ENCODE measurements at regions of chr1 and their contacts with region 1.

Region 1: DNA sequence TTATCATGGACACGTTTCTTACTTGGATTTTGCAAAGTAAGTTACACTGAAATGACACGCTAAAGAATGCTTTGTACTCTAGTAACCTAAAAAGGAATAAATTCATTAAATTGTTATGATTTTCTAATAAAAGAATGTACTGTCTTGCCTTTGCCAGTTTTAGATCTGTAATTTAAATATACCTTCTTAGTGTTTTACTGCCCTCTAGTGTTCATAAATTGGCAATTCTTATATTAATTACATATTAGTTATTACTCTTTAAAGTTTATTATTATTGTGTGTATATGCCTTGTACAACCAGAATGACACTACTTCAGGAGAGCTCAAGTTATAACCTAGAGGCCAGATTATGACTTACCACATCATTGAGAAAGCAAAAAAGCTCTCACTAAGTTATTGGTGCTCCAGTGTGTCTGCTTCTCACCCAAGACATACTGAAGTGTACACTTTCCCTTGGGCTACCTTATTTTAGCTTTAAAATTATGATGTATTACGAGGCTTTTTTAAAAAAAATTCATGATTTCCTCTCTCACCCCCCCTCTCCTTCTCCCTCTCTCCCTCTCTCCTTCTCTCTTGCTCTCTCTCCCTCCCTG is 169.9 kb downstream of the HS2ST1 start:
- DNase-seq: no peak
- H3K4me3 ChIP-seq: no peak overlapping the region
- CTCF ChIP-seq: no peak

Region 2: DNA sequence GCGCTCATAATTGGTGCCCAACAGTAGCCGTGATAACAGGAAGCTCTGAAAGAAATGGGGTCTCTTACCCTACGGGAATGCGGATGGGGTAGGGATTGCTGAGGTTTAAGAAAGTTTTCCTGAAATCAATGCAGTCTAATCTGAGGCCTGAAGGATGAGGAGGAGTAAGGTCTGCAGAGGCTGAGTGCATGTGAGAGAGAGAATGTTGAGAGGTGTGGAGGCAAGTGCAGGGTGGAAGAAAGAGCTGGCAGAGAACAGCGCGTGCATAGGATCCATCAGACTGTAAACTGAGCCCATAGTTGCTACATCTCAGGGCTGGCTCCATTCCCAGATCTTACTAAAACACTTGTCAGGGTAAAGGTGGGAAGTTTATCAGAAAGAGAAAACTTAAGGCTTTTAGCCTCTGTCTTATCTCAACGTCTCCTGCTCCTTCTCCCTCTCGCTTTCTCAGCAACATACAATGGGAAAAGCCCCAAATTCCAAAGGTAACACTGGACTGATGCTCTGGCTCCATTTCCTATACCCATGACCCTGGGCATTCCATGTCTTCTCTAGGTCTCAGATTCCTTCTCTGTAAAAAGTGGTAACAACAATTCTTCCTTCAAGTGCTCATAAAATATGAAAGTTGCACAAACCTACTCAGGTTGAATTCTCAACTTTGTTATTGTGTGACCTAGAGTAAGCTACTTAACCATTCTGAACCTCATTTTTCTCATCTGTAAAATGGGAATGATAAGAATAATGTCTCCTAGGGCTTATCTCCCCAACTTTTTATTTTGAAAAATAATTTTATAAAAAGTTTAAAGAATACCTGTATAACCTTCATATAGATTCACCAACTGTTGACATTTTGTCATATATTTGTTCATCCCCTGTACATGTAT is 304.8 kb before region 1 on chr1:
- CTCF ChIA-PET with region 1: interaction called, 51 read pairs
- POLR2A ChIA-PET with region 1: no interaction called
- DNase-seq: no peak
- H3K4me3 ChIP-seq: no peak overlapping the region
- CTCF ChIP-seq: no peak

Region 3: GRCh38 chr1:86841116-86841515 is 243.2 kb before region 1 on chr1:
- CTCF ChIA-PET with region 1: interaction called, 68 read pairs
- POLR2A ChIA-PET with region 1: no interaction called
- DNase-seq: no peak
- H3K4me3 ChIP-seq: no peak overlapping the region
- CTCF ChIP-seq: no peak

Region 4: GRCh38 chr1:86887479-86888162 is 196.7 kb before region 1 on chr1:
- CTCF ChIA-PET with region 1: no interaction called
- POLR2A ChIA-PET with region 1: no interaction called
- DNase-seq: no peak
- H3K4me3 ChIP-seq: no peak overlapping the region
- CTCF ChIP-seq: no peak

Region 5: GRCh38 chr1:86965012-86965826 is 119.1 kb before region 1 on chr1:
- CTCF ChIA-PET with region 1: interaction called, 23 read pairs
- POLR2A ChIA-PET with region 1: no interaction called
- DNase-seq: no peak
- H3K4me3 ChIP-seq: no peak overlapping the region
- CTCF ChIP-seq: peak; percentile 52

Region 6: GRCh38 chr1:87017998-87018672 is 66.2 kb before region 1 on chr1:
- CTCF ChIA-PET with region 1: no interaction called
- POLR2A ChIA-PET with region 1: no interaction called
- DNase-seq: no peak
- H3K4me3 ChIP-seq: no peak overlapping the region
- CTCF ChIP-seq: no peak

Region 7: GRCh38 chr1:87030740-87031690 is 53.3 kb before region 1 on chr1:
- CTCF ChIA-PET with region 1: no interaction called
- POLR2A ChIA-PET with region 1: no interaction called
- DNase-seq: no peak
- H3K4me3 ChIP-seq: no peak overlapping the region
- CTCF ChIP-seq: no peak

Region 8: GRCh38 chr1:87064986-87065385 is 19.4 kb before region 1 on chr1:
- CTCF ChIA-PET with region 1: interaction called, 50 read pairs
- POLR2A ChIA-PET with region 1: no interaction called
- DNase-seq: no peak
- H3K4me3 ChIP-seq: no peak overlapping the region
- CTCF ChIP-seq: no peak

Region 9: DNA sequence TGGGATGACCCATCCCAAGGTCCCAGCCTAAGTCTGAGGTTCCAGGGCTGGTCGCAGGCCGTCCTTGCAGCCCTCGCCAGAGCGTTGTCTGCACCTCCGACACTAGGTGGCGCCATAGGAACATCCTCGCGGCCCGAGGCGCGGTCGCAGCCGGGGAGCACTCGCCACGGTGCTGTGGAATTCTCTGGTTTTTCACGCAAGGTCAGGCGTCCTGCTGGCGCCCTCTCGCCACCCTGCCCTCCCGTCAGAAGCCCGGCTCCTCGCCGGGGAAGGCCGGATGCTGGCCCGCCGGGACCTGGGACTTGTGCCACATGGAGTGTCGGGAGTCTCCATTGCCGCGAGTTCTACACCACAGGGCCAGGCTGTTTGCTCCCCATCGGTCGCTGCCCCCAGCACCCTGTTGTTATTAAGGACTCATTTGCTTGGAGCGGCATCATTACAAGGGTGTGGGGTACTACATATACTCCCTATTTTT is 47.5 kb after region 1 on chr1:
- CTCF ChIA-PET with region 1: no interaction called
- POLR2A ChIA-PET with region 1: no interaction called
- DNase-seq: no peak
- H3K4me3 ChIP-seq: peak overlapping the region; percentile 50
- CTCF ChIP-seq: peak; percentile 97